ENCODE measurements at regions of chr14 and their contacts with region 1.

Region 1: DNA sequence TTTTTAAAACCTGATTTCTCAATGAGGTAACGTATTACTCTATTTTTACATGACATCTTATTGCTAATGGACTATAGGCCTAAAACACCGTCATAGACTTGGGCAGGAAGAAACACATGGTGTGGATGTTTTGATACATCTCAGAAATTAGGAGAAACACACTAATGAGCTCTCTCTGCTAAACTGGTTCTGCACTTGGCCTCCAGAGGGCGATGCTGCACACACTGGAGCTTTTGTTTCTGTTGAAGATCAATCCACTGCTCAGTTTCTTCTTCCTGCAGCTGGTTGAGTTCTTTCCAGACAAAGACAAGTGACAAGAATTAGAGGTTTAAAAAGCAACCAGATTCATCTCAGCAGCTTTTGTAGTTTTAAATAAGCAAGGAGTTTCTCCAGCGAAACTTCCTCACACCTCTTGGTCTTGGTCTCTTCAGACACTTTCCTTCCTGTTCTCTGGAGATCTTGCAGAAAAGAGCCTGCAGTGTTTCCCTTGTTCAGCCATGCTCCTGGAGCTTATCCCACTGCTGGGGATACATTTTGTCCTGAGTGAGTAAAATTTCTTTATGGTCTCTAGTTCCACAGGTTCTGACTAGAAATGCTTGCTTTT is 178.5 kb upstream of the OR4E1 start:
- DNase-seq: peak; percentile 27 to 88
- H3K4me3 ChIP-seq: no peak overlapping the region
- H3K27ac ChIP-seq: no peak overlapping the region
- H3K4me1 ChIP-seq: no peaks in the 10 kb centered on the region
- H3K27me3 ChIP-seq: no peaks in the 10 kb centered on the region
- CTCF ChIP-seq: peak; percentile 65 to 92 (median 67)
- EP300 ChIP-seq: no peak
- POLR2A ChIP-seq: no peak
- RAD21 ChIP-seq: peak in 1 of 2 experiments; percentile 35; a peak in 1 of 4 replicates

Region 2: DNA sequence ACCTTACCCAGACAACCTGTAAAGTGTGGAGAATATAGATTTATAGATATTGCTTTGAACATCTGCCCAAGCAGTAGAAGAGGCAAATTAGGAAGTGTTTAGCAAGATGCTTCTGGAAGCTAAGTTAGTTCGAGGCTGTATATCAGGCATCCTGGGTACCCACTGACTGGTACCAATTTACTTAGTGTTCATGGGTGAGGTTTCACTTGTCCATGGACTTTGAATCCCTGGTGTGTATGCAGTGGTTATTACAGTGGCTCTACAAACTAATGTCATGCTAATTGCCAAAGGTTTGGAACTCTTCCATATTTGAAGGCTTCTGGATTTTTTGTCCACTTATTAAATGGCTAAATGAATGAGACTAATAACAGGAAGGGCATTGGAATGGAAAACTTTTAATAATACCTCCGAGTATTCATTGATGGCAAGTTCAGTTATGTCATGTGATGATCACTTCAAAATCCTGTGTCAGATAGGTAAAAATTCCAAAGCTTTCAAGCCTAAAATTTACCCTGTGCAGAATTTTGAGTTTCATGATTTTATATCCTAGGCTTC is 198.8 kb before region 1 on chr14 and contains the start of gene OR4E2:
- CTCF ChIA-PET with region 1: no interaction called
- POLR2A ChIA-PET with region 1: no interaction called
- DNase-seq: no peak
- H3K4me3 ChIP-seq: no peak within 1 kb of the TSS
- H3K27ac ChIP-seq: no peak within 1 kb of the TSS
- H3K4me1 ChIP-seq: peaks cover 0 to 5% (median 3%) of the 10 kb centered on the region in 4 experiments; a peak in 6 of 7 replicates
- H3K27me3 ChIP-seq: no peaks in the 10 kb centered on the region
- CTCF ChIP-seq: no peak
- EP300 ChIP-seq: no peak
- POLR2A ChIP-seq: no peak
- RAD21 ChIP-seq: no peak
- total RNA-seq, gene OR4E2: not detected in 2 replicates

Region 3: DNA sequence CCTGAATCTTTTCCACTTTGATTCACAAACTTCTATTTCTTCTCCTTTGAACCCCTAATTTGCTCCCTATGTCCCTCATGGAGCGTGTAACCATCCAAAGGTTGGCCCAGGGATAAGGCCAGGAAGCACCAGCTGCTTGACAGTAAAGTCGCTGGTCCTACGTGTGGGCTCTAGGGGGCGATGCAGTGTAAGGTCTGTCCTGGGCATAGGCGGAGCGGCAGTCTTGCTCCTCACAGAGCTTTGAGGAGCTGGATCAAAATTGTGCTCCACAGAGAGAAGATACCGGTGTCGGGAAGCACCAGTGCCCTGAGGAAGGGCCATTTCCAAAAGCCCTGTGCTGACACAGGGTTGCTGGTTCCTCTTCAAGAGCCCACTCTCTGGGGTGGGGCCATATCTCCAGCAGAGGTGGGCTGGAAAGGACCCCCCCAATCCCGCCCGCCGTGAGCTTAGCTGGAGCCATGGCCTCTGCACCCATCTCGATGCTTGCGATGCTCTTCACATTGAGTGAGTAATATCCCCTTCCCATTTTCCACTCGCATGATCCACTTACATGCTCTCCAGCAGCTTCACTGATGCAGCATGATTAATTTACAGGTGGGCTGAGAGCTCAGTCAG is 128.6 kb before region 1 on chr14:
- CTCF ChIA-PET with region 1: interaction called, 12 read pairs
- POLR2A ChIA-PET with region 1: no interaction called
- DNase-seq: peak; percentile 47 to 79
- H3K4me3 ChIP-seq: no peak overlapping the region
- H3K27ac ChIP-seq: no peak overlapping the region
- H3K4me1 ChIP-seq: no peaks in the 10 kb centered on the region
- H3K27me3 ChIP-seq: no peaks in the 10 kb centered on the region
- CTCF ChIP-seq: peak; percentile 85 to 99 (median 96)
- EP300 ChIP-seq: no peak
- POLR2A ChIP-seq: no peak
- RAD21 ChIP-seq: peak; percentile 69 to 79

Region 4: DNA sequence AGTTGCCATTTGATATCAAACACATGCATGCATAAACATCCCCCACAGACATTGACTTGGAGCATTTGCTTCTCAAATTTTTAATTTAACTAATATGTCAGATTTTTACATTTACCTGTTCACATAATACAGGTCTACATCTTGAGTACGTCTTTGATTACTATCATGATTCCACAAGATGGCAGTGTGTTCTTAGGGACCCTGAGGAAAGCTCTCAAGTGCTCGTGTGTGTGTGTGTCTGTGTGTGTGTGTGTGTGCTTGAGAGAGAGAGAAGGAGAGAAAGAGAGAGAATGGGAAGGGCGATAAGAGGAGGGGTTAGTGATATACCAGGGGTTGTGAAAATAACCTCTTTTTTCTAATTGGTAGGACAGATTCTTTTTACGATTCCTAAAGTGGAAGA is 11.4 kb before region 1 on chr14:
- CTCF ChIA-PET with region 1: interaction called, 62 read pairs
- POLR2A ChIA-PET with region 1: no interaction called
- DNase-seq: no peak
- H3K4me3 ChIP-seq: no peak overlapping the region
- H3K27ac ChIP-seq: no peak overlapping the region
- H3K4me1 ChIP-seq: no peaks in the 10 kb centered on the region
- H3K27me3 ChIP-seq: no peaks in the 10 kb centered on the region; a peak in 2 of 7 replicates
- CTCF ChIP-seq: peak in 2 of 3 experiments; percentile 28 to 30; a peak in 2 of 4 replicates
- EP300 ChIP-seq: no peak
- POLR2A ChIP-seq: no peak
- RAD21 ChIP-seq: peak; percentile 28 to 36; a peak in 3 of 4 replicates

Region 5: GRCh38 chr14:21965042-21965441 is 112.9 kb after region 1 on chr14:
- CTCF ChIA-PET with region 1: no interaction called
- POLR2A ChIA-PET with region 1: no interaction called
- DNase-seq: no peak
- H3K4me3 ChIP-seq: no peak overlapping the region
- H3K27ac ChIP-seq: no peak overlapping the region
- H3K4me1 ChIP-seq: no peaks in the 10 kb centered on the region
- H3K27me3 ChIP-seq: no peaks in the 10 kb centered on the region
- CTCF ChIP-seq: no peak
- EP300 ChIP-seq: no peak
- POLR2A ChIP-seq: no peak
- RAD21 ChIP-seq: no peak

Region 6: GRCh38 chr14:21990116-21990515 is 138.0 kb after region 1 on chr14:
- CTCF ChIA-PET with region 1: no interaction called
- POLR2A ChIA-PET with region 1: no interaction called
- DNase-seq: no peak
- H3K4me3 ChIP-seq: no peak overlapping the region
- H3K27ac ChIP-seq: no peak overlapping the region
- H3K4me1 ChIP-seq: no peaks in the 10 kb centered on the region
- H3K27me3 ChIP-seq: no peaks in the 10 kb centered on the region
- CTCF ChIP-seq: peak in 2 of 3 experiments; percentile 14 to 44; a peak in 2 of 4 replicates
- EP300 ChIP-seq: no peak
- POLR2A ChIP-seq: no peak
- RAD21 ChIP-seq: 0 out of 4 replicates have a peak, but pooled peaks of 1 of the 2 experiments have one; percentile 15

Measured in H1 (cell line).